ENCODE measurements at regions of chr9 and their contacts with region 1.

Region 1: DNA sequence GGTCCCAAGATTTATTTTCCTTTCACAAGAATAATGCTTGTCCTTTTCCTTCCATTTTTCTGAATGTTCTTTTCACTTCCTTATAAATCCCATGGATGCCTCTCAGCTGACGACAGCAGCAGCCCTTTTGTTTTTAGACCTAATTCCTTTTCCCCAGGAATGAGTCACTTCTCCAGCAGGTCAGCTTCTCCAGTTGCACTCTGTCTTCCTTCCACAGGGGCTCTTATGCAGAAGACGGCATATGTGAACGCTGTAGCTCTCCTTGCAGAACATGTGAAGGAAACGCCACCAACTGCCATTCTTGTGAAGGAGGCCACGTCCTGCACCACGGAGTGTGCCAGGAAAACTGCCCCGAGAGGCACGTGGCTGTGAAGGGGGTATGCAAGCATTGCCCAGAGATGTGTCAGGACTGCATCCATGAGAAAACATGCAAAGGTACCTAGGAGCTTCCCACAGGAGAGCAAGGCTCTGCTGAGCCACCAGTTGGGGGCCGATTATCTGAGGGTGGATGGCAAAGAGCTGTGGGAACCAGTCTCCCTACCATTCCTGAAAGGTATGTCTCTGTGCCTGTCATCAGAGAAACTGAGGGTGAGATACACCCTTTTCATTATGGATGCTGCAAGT is 72.9 kb downstream of the RFK start:
- DNase-seq: no peak
- ATAC-seq: no peak
- H3K4me3 ChIP-seq: no peak overlapping the region
- H3K27ac ChIP-seq: no peak overlapping the region
- H3K4me1 ChIP-seq: no peaks in the 10 kb centered on the region
- H3K27me3 ChIP-seq: no peaks in the 10 kb centered on the region
- CTCF ChIP-seq: no peak

Region 2: GRCh38 chr9:76374702-76375559 is 53.6 kb after region 1 on chr9:
- intact Hi-C with region 1: loop called in 1 of 3 experiments (anchors 5 kb)
- DNase-seq: peak; percentile 78 to 92 (median 84)
- ATAC-seq: peak; percentile 79 to 89 (median 84)
- H3K4me3 ChIP-seq: no peak overlapping the region
- H3K27ac ChIP-seq: peak overlapping the region in 3 of 4 donors; percentile 70 to 83 (median 77)
- H3K4me1 ChIP-seq: peaks cover 34 to 48% (median 48%) of the 10 kb centered on the region in 3 donors
- H3K27me3 ChIP-seq: no peaks in the 10 kb centered on the region
- CTCF ChIP-seq: no peak

Measured in pancreas (tissue), 10 donors.